Breast epithelium (tissue), 4 donors: ENCODE measurements at regions of chr4 and their contacts with region 1.

Region 1: DNA sequence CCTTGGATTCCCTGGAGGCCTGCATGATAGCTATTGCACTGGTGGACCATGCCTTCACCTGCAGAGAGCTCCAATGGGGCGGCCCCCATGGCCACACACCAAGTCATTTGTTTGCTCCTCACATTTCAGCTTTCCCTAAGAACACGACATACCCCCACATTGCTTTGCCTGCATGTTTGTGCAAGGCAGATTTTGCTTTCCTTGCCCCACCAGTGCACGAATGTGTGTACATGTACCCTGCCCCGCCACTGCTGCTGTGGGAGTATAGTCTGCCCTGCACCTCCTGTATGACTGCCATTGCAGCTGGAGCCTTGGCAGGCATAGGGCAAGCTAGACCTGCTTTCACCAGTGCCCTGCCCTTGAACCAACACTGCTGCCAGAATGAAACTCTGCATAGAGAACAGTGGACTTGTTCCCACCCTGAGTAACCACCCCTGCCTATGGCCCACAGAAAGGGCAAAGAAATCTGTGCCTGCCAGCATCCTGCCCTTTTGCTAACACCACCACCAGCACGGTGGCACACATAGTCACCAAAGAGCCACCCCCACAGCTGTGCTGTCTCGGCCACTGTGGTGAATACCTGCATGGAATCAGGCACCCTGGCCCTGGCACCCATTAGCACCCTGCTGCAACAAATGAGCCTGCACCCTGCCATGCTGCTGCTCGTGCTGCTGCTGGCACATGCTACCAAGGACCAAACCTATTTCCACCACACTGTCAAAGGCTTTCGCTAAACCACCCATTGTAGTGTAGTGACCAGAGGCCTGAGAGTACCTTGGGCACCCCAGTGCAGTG is 661.7 kb upstream of the FAM241A start:
- DNase-seq: no peak
- H3K4me3 ChIP-seq: no peak overlapping the region
- H3K27ac ChIP-seq: no peak overlapping the region
- H3K4me1 ChIP-seq: no peaks in the 10 kb centered on the region
- H3K27me3 ChIP-seq: no peaks in the 10 kb centered on the region
- CTCF ChIP-seq: no peak
- POLR2A ChIP-seq: no peak

Region 2: GRCh38 chr4:109749388-109750082 is 1734.0 kb before region 1 on chr4:
- intact Hi-C with region 1: no loop called
- DNase-seq: no peak
- H3K4me3 ChIP-seq: no peak overlapping the region
- H3K27ac ChIP-seq: no peak overlapping the region
- H3K4me1 ChIP-seq: no peaks in the 10 kb centered on the region
- H3K27me3 ChIP-seq: no peaks in the 10 kb centered on the region
- CTCF ChIP-seq: no peak
- POLR2A ChIP-seq: no peak

Region 3: DNA sequence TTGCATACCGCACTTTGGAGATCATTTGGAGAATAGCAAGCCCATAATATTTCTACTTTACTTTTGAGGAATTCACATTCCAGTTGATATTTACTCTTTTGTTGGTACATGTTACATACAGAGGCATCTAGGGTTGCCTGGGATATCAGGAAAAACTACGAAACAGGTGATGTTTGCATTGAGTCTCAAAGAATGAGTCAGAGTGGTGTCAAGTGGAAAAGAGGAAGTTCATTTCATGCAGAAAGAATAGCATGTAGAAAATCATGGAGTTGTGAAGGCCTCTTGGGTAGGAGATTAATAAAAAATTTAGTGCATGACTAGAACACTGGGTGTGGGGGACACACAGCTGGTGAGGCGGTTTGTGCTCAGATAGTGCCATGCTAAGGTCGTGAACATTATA is 1251.7 kb before region 1 on chr4:
- intact Hi-C with region 1: no loop called
- DNase-seq: no peak
- H3K4me3 ChIP-seq: no peak overlapping the region
- H3K27ac ChIP-seq: no peak overlapping the region
- H3K4me1 ChIP-seq: no peaks in the 10 kb centered on the region
- H3K27me3 ChIP-seq: no peaks in the 10 kb centered on the region
- CTCF ChIP-seq: no peak
- POLR2A ChIP-seq: no peak

Region 4: GRCh38 chr4:112523764-112524505 is 1040.4 kb after region 1 on chr4:
- intact Hi-C with region 1: loop called (anchors 5 kb)
- DNase-seq: no peak
- H3K4me3 ChIP-seq: peak overlapping the region; percentile 32 to 65 (median 54)
- H3K27ac ChIP-seq: peak overlapping the region; percentile 4 to 65
- H3K4me1 ChIP-seq: peaks cover 0 to 4% of the 10 kb centered on the region in 2 donors
- H3K27me3 ChIP-seq: peaks cover 0 to 55% of the 10 kb centered on the region in 2 donors
- CTCF ChIP-seq: peak; percentile 41 to 65 (median 55)
- POLR2A ChIP-seq: no peak